ENCODE measurements at regions of chr15 and their contacts with region 1.

Region 1: GRCh38 chr15:55649054-55649423 is 60.9 kb upstream of the PYGO1 start:
- DNase-seq: no peak
- ATAC-seq: no peak
- H3K4me3 Mint-ChIP-seq: no peak overlapping the region
- H3K27ac Mint-ChIP-seq: no peak overlapping the region
- H3K4me1 Mint-ChIP-seq: peaks cover 22% of the 10 kb centered on the region
- H3K27me3 Mint-ChIP-seq: peaks cover 6% of the 10 kb centered on the region
- CTCF ChIP-seq: no peak

Region 2: GRCh38 chr15:55619783-55620182 is 29.3 kb before region 1 on chr15:
- CTCF ChIA-PET with region 1: no interaction called
- POLR2A ChIA-PET with region 1: no interaction called
- DNase-seq: no peak
- ATAC-seq: no peak
- H3K4me3 Mint-ChIP-seq: no peak overlapping the region
- H3K27ac Mint-ChIP-seq: no peak overlapping the region
- H3K4me1 Mint-ChIP-seq: peaks cover 10% of the 10 kb centered on the region
- H3K27me3 Mint-ChIP-seq: no peaks in the 10 kb centered on the region
- CTCF ChIP-seq: no peak

Region 3: GRCh38 chr15:55637086-55637485 is 12.0 kb before region 1 on chr15:
- CTCF ChIA-PET with region 1: interaction called, 13 read pairs
- POLR2A ChIA-PET with region 1: no interaction called
- DNase-seq: no peak
- ATAC-seq: no peak
- H3K4me3 Mint-ChIP-seq: no peak overlapping the region
- H3K27ac Mint-ChIP-seq: no peak overlapping the region
- H3K4me1 Mint-ChIP-seq: no peaks in the 10 kb centered on the region
- H3K27me3 Mint-ChIP-seq: no peaks in the 10 kb centered on the region; the same call in 1 of the 2 replicates
- CTCF ChIP-seq: no peak

Region 4: GRCh38 chr15:55799291-55800212 is 150.5 kb after region 1 on chr15:
- CTCF ChIA-PET with region 1: interaction called, 55 read pairs
- POLR2A ChIA-PET with region 1: no interaction called
- DNase-seq: peak; percentile 79
- ATAC-seq: peak; percentile 85
- H3K4me3 Mint-ChIP-seq: peak overlapping the region; percentile 16
- H3K27ac Mint-ChIP-seq: peak overlapping the region; percentile 74; the same call in 1 of the 2 replicates
- H3K4me1 Mint-ChIP-seq: peaks cover 18% of the 10 kb centered on the region
- H3K27me3 Mint-ChIP-seq: no peaks in the 10 kb centered on the region; the same call in 1 of the 2 replicates
- CTCF ChIP-seq: peak; percentile 51; the same call in 1 of the 2 replicates

Measured in WTC11 (cell line).